Endothelial cell of umbilical vein (primary cell): ENCODE measurements at regions of chr18 and their contacts with region 1.

Region 1: DNA sequence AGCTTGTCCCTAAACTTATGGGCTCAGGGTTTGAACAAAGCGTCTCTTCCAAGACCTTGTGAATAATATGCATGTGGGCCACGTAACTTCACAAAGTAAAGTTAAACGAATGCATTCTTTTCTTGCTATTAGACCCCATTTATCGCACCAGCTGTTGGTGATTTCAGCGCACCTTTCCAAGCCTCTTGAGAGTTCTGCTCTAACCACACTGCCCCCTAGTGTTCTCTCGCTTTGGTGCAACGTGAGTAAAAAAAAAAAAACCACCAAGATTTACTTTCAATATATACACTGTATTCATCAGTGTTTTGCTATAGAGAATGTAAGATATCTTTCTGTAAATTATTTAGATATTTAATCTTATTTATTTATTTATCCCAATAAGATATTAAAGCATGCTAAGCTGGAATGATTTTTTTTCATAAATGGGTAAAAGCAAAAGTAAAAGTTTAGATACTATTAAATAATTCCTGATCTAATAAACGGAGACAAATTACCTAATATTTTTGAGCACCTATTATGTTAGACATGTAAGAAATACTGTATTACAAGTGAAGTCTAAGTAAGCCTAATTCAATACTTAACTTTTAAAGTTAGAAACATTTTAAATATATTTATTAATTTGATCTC is 459.5 kb downstream of the DLGAP1 start:
- DNase-seq: peak; percentile 78
- H3K4me3 ChIP-seq: no peak overlapping the region
- H3K27ac ChIP-seq: no peak overlapping the region
- H3K4me1 ChIP-seq: no peaks in the 10 kb centered on the region
- H3K27me3 ChIP-seq: no peaks in the 10 kb centered on the region
- CTCF ChIP-seq: peak; percentile 75 to 85
- POLR2A ChIP-seq: no peak

Region 2: DNA sequence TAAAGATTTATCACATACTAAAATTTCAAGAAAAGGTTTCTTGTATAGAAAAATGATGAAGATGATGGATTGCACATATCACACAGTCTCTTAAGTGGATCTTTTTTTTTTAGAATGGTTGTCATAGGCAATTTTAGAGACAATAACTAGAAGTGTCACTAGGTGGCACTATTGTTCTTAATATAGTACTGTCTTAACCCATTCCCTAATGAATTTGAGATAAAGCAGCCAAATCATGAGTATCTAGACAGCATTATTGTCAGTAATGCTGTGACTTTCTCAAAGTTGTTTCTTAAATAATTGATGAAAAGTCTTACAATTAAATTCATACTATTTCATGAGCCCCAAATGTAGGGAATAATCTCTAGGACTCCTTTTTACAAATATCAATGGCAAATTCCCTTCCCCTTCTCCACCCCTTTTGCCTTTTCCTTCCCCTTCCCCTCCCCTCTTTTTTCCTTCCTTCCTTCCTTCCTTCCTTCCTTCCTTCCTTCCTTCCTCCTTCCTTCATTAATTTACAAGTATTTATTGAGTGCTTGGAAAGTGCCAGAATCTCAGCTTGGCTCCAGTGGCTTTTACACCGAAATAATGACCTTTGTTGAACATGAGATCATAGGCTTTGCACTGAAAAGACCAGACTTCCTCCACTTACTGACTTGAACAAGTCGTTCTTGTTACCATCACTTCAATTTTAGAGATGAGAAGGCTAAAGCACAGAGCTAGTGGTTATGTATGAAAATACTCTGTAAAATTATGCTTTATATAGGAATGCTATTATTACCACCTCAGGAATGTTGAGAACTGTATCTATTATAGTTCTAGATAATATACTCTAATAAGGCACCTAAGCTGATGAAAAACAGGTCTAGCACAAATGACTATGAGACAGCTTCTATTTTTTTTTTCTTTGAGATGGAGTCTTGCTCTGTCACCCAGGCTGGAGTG is 713.9 kb before region 1 on chr18:
- CTCF ChIA-PET with region 1: interaction called, 8 read pairs
- POLR2A ChIA-PET with region 1: no interaction called
- dilution Hi-C with region 1: no loop called
- intact Hi-C with region 1: loop called (anchors 2 kb)
- DNase-seq: peak; percentile 91
- H3K4me3 ChIP-seq: no peak overlapping the region
- H3K27ac ChIP-seq: peak overlapping the region; percentile 84
- H3K4me1 ChIP-seq: peaks cover 38% of the 10 kb centered on the region
- H3K27me3 ChIP-seq: no peaks in the 10 kb centered on the region
- CTCF ChIP-seq: peak; percentile 6 to 21
- POLR2A ChIP-seq: no peak

Region 3: DNA sequence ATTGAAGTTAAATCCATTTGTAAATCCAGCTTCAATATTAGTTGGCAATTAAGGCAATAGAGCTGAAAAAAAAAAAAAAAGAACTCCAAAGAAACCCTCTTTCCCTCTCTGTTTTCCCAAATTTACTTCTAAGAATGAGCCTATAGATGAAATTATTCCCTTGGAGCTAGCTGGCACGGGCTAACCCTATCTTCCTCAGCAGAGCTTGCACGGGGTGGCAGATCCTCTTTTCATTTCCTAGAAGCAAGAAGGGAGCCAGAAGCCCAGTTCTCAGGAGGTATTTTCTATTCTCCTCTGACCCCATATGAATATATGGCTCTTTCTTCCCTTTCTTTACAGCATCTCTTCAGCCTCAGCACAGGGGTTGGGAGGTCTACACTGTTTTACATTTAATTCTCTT is 119.6 kb before region 1 on chr18:
- CTCF ChIA-PET with region 1: interaction called, 11 read pairs
- POLR2A ChIA-PET with region 1: no interaction called
- dilution Hi-C with region 1: no loop called
- intact Hi-C with region 1: loop called (anchors 2 kb)
- DNase-seq: no peak
- H3K4me3 ChIP-seq: no peak overlapping the region
- H3K27ac ChIP-seq: no peak overlapping the region
- H3K4me1 ChIP-seq: no peaks in the 10 kb centered on the region
- H3K27me3 ChIP-seq: peaks cover 8 to 28% of the 10 kb centered on the region in 2 experiments
- CTCF ChIP-seq: no peak
- POLR2A ChIP-seq: no peak

Region 4: GRCh38 chr18:3935316-3935715 is 60.3 kb before region 1 on chr18:
- CTCF ChIA-PET with region 1: no interaction called
- POLR2A ChIA-PET with region 1: no interaction called
- dilution Hi-C with region 1: no loop called
- intact Hi-C with region 1: no loop called
- DNase-seq: no peak
- H3K4me3 ChIP-seq: no peak overlapping the region
- H3K27ac ChIP-seq: no peak overlapping the region
- H3K4me1 ChIP-seq: no peaks in the 10 kb centered on the region
- H3K27me3 ChIP-seq: no peaks in the 10 kb centered on the region
- CTCF ChIP-seq: no peak
- POLR2A ChIP-seq: no peak

Region 5: GRCh38 chr18:3983351-3983969 is 12.1 kb before region 1 on chr18:
- CTCF ChIA-PET with region 1: interaction called, 52 read pairs
- POLR2A ChIA-PET with region 1: no interaction called
- dilution Hi-C with region 1: no loop called
- intact Hi-C with region 1: no loop called
- DNase-seq: no peak
- H3K4me3 ChIP-seq: no peak overlapping the region
- H3K27ac ChIP-seq: no peak overlapping the region
- H3K4me1 ChIP-seq: no peaks in the 10 kb centered on the region
- H3K27me3 ChIP-seq: no peaks in the 10 kb centered on the region
- CTCF ChIP-seq: no peak
- POLR2A ChIP-seq: no peak

Region 6: DNA sequence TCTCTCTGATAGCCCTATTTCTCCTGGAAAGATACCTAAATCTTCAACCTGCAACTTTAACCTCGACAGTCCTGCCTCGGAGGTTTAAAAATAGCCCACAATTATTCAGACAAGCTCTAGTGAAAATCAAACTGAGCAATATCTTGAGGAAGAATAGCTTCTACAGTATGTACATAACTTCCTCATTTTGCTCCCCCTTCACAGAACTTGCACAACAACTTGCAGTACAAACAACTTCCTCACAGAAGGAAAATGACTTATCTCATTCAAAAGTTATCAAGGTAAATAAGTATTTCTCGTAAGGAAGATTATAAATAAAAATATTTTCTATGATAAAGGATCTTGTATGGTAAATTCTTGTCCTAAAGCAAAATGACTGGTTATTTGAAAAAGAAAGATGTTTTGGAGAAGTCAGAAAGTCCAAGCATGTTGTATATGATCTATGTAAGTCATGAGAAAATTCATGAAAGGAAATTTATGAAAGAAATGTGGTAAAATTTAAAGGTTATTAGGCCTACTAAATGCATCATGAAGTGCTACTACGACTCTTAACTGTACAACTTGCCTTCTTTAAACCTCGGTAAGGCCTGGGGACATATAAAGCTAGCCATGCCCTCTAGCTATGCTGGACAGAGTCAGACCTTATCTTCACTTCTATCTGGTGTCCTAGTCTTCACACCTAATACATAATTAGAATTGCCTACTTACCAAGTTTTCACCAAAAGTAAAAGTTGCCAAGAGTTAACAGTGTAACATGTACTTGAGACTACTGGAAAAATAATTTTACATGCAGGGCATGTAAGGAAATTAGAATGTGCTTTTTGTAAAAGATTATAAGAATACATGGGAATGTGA is 65.1 kb after region 1 on chr18:
- CTCF ChIA-PET with region 1: no interaction called
- POLR2A ChIA-PET with region 1: no interaction called
- dilution Hi-C with region 1: no loop called
- intact Hi-C with region 1: no loop called
- DNase-seq: no peak
- H3K4me3 ChIP-seq: no peak overlapping the region
- H3K27ac ChIP-seq: no peak overlapping the region
- H3K4me1 ChIP-seq: no peaks in the 10 kb centered on the region
- H3K27me3 ChIP-seq: no peaks in the 10 kb centered on the region
- CTCF ChIP-seq: no peak
- POLR2A ChIP-seq: no peak